Heart left ventricle (tissue), 16 donors: ENCODE measurements at regions of chr6 and their contacts with region 1.

Region 1: DNA sequence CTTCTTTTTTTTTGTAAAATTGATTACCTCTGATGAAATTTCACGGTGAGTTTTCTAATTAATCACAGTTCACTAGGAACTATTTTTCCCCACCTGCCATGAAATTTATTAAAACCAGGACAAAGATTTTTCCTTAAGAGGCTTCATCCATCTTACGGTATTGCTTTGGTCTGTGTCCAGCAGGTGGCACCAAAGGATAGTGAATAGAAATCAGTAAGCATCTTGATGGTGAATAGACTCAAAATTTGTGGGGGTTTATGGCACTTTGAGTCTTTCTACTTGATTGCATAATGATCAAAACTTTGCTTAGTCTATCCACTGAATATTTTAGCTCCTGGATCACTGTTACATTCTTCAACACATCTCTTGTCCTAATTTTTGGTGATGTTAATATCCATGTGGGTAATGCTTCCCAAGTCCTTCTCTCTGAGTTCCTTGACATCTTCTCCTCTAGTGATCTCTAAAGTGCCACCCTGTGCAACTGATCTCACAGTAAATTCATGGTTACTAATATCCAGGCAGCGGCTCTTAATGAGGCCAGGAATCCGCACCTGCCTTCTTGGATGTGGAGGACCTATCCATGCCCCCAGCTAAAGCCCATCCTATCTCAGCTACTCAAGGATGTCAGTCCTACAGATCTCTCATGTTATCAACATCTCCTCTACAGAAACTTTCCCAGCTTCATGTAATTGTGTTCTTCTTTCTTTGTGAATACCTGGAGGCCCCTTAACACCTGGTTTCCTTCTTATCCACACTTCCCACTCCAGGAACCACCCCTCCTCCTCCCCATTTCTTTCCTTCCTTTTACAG is 54.5 kb downstream of the STMND1 start:
- DNase-seq: peak in 4 of 5 donors; percentile 36 to 58 (median 55)
- ATAC-seq: peak in 2 of 4 donors; percentile 42 to 57
- H3K4me3 ChIP-seq: no peak overlapping the region
- H3K27ac ChIP-seq: no peak overlapping the region
- H3K4me1 ChIP-seq: no peaks in the 10 kb centered on the region
- H3K27me3 ChIP-seq: no peaks in the 10 kb centered on the region
- CTCF ChIP-seq: peak; percentile 57 to 90 (median 80)
- POLR2A ChIP-seq: no peak

Region 2: GRCh38 chr6:17768388-17768787 is 612.1 kb after region 1 on chr6:
- intact Hi-C with region 1: loop called in 1 of 10 experiments (anchors 10 kb)
- DNase-seq: no peak
- ATAC-seq: peak in 3 of 4 donors; percentile 58 to 64 (median 61)
- H3K4me3 ChIP-seq: no peak overlapping the region
- H3K27ac ChIP-seq: no peak overlapping the region
- H3K4me1 ChIP-seq: no peaks in the 10 kb centered on the region
- H3K27me3 ChIP-seq: no peaks in the 10 kb centered on the region
- CTCF ChIP-seq: no peak
- POLR2A ChIP-seq: no peak

Region 3: GRCh38 chr6:17808609-17809008 is 652.3 kb after region 1 on chr6:
- intact Hi-C with region 1: loop called (anchors 5 to 10 kb)
- DNase-seq: no peak
- ATAC-seq: no peak
- H3K4me3 ChIP-seq: no peak overlapping the region
- H3K27ac ChIP-seq: no peak overlapping the region
- H3K4me1 ChIP-seq: peaks cover 0 to 6% (median 0%) of the 10 kb centered on the region in 12 donors
- H3K27me3 ChIP-seq: no peaks in the 10 kb centered on the region
- CTCF ChIP-seq: no peak
- POLR2A ChIP-seq: no peak

Region 4: DNA sequence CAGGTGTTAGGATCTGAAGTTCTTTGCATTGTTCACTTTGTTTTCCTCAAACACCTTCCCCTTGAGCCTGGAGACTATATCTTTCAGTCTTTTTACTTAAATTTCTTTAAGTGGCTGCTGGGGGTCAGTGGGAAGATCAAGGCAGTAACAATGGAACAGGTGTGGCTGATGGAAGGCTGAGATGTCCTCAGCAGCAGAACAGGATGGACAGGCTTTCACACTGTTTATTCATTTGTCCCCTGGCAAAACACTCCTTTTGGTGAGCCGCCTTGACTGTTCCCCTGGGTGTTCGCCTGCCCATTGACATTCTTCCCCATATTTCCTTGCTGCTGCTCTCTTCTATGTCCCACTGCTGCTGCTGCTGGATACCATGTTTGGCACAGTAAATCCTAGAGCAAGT is 1268.9 kb after region 1 on chr6:
- intact Hi-C with region 1: no loop called
- DNase-seq: no peak
- ATAC-seq: no peak
- H3K4me3 ChIP-seq: no peak overlapping the region
- H3K27ac ChIP-seq: no peak overlapping the region
- H3K4me1 ChIP-seq: peaks cover 0 to 12% (median 0%) of the 10 kb centered on the region in 12 donors
- H3K27me3 ChIP-seq: no peaks in the 10 kb centered on the region
- CTCF ChIP-seq: no peak
- POLR2A ChIP-seq: no peak